Adrenal gland (tissue), 19 donors: ENCODE measurements at regions of chr16 and their contacts with region 1.

Region 1: DNA sequence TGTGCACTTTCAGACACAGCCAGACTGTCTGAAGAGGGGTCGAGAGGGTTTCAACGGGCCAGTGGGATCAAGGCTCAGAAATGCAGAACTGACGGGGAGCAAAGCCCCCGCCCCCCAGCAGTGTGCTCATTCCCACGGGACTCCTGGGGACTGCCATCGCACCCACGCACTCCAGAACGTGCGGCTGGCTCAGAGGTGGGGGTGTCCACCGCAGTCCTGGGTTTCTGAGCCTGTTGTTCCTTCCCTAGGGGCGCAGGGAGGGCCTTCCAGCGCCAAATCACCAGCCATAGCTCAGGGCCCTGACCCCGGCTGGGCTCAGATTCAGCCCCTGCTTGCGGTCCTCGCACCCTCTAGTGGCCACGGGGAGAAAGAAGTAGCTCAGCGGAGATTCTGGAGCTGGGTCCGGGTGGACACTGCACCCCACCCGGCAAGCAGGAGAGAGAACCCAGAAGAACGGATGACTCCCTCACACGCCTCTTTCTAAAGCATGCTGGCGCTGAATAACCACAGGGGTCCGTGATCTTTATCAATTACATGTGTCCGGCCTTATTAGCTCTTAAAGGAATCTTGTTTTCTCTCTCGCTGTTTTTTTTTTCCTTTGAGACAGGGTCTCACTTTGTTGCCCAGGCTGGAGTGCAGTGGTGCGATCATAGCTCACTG is 45.0 kb upstream of the USP7 start:
- DNase-seq: peak; percentile 64 to 86 (median 81)
- H3K4me3 ChIP-seq: peak overlapping the region in 1 of 4 donors; percentile 12
- H3K27ac ChIP-seq: no peak overlapping the region
- H3K4me1 ChIP-seq: peaks cover 0 to 8% of the 10 kb centered on the region in 2 donors
- H3K27me3 ChIP-seq: peaks cover 4% of the 10 kb centered on the region
- CTCF ChIP-seq: peak; percentile 67 to 85 (median 83)
- POLR2A ChIP-seq: no peak

Region 2: GRCh38 chr16:8818504-8819270 is 190.0 kb before region 1 on chr16:
- intact Hi-C with region 1: no loop called
- DNase-seq: no peak
- H3K4me3 ChIP-seq: no peak overlapping the region
- H3K27ac ChIP-seq: no peak overlapping the region
- H3K4me1 ChIP-seq: peaks cover 0 to 3% of the 10 kb centered on the region in 2 donors
- H3K27me3 ChIP-seq: no peaks in the 10 kb centered on the region
- CTCF ChIP-seq: no peak
- POLR2A ChIP-seq: no peak

Region 3: GRCh38 chr16:8892101-8892575 is 116.6 kb before region 1 on chr16:
- intact Hi-C with region 1: loop called in 1 of 2 experiments (anchors 10 kb)
- DNase-seq: peak; percentile 59 to 87 (median 84)
- H3K4me3 ChIP-seq: no peak overlapping the region
- H3K27ac ChIP-seq: peak overlapping the region in 3 of 5 donors; percentile 18 to 83 (median 73)
- H3K4me1 ChIP-seq: peaks cover 0 to 28% of the 10 kb centered on the region in 2 donors
- H3K27me3 ChIP-seq: no peaks in the 10 kb centered on the region
- CTCF ChIP-seq: no peak
- POLR2A ChIP-seq: peak in 1 of 2 donors; percentile 26

Region 4: DNA sequence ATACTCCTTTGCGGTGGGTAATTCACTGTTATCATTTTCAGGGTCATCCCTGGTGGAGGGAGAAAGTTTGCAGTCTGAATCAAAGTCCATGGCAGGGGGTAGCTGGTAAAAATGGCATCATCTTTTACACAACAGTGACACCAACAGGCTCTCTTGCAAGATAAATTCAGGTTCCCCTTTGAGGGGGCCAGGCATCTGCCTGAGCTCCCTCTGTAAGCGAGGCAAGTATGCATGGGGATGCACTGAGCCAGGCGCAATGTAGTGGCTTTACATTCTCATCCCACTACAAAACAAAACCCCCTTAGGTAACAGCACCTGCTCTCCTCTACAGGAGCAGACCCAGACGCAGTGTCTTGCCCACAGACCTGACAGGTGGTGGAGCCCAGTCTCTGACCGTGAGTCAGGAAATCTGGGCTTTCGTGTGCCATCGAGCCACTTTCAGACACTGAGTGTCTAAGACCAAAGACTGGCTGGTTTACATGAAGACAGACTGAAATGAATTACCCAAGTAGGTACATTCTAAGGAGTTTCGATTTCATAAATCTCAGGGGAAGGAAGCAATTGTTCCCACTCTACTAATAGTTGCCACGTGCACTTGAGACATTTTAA is 108.9 kb before region 1 on chr16:
- intact Hi-C with region 1: loop called (anchors 5 to 10 kb)
- DNase-seq: no peak
- H3K4me3 ChIP-seq: no peak overlapping the region
- H3K27ac ChIP-seq: no peak overlapping the region
- H3K4me1 ChIP-seq: no peaks in the 10 kb centered on the region
- H3K27me3 ChIP-seq: no peaks in the 10 kb centered on the region
- CTCF ChIP-seq: no peak
- POLR2A ChIP-seq: no peak